Activated naive CD4-positive, alpha-beta T cell treated with anti-CD3 and anti-CD28 coated beads for 36 hours (primary cell): ENCODE measurements at regions of chrX and their contacts with region 1.

Region 1: DNA sequence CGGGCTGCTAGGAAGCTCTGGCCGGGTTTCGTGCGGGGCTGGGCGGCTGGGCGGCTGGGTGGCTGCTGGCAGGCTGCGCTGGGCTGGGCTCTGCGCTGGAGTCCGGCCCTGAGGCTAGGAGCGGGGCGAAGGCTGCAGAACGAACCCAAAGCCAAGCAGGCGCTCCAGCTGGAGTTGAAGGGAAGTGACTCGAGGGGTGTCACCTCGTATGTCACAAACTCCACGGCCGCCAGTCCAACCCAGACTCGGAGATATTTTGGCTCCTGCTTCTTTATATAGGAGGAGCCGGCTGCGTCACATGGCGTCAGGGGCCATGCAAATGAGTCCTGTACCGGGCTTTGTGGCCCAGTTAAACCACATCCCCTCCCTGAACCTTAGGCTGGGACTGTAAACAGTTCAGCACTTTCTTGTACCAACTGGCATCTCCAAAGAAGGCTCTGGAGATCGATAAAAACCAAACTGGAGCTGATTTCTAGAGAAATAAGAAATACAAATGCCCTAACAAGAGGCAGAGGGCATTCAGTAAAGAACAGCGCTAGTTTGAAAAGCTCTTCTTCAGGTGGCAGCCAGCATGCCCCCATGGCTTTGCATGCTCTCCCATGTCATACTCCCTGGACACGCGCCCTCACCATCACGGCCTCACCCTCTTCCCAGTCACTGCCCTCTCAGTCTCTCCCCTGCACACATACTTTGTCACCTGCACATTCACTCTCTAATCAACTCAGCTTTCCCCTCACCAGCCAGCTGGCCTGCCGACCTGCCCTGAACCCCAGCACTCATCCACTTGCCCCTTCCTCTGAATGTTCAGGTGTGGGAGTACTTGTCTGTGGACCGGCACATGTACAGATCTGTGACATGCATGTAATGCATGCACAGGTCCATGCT is 58.5 kb downstream of the TSC22D3 start:
- DNase-seq: peak; percentile 87
- H3K4me3 Mint-ChIP-seq: peak overlapping the region; percentile 92
- H3K27ac Mint-ChIP-seq: peak overlapping the region; percentile 77
- H3K4me1 Mint-ChIP-seq: peaks cover 37% of the 10 kb centered on the region
- H3K27me3 Mint-ChIP-seq: no peaks in the 10 kb centered on the region

Region 2: DNA sequence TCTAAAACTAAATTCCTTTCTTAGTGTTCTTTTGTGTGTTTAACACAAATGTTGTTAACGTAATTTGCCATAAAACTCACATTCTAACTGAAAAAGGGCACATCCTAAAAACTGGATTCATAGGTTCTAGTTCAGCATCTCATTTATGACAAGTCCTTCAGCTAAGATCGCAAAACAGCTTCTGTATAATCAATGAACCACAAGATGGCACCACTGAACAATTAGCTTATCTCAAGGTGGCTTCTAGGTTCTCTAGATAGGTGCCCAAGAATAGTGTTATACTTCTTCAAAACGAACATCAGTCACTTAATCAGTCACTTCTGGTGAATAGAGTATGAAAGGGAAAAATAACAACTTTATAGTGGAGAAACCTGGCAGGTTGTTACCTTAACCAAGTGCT is 1840.4 kb before region 1 on chrX:
- CTCF ChIA-PET with region 1: no interaction called
- intact Hi-C with region 1: no loop called
- DNase-seq: no peak
- H3K4me3 Mint-ChIP-seq: no peak overlapping the region
- H3K27ac Mint-ChIP-seq: no peak overlapping the region
- H3K4me1 Mint-ChIP-seq: no peaks in the 10 kb centered on the region
- H3K27me3 Mint-ChIP-seq: no peaks in the 10 kb centered on the region

Region 3: GRCh38 chrX:107565931-107566602 is 151.0 kb before region 1 on chrX:
- CTCF ChIA-PET with region 1: no interaction called
- intact Hi-C with region 1: no loop called
- DNase-seq: no peak
- H3K4me3 Mint-ChIP-seq: no peak overlapping the region
- H3K27ac Mint-ChIP-seq: no peak overlapping the region
- H3K4me1 Mint-ChIP-seq: no peaks in the 10 kb centered on the region
- H3K27me3 Mint-ChIP-seq: no peaks in the 10 kb centered on the region

Region 4: DNA sequence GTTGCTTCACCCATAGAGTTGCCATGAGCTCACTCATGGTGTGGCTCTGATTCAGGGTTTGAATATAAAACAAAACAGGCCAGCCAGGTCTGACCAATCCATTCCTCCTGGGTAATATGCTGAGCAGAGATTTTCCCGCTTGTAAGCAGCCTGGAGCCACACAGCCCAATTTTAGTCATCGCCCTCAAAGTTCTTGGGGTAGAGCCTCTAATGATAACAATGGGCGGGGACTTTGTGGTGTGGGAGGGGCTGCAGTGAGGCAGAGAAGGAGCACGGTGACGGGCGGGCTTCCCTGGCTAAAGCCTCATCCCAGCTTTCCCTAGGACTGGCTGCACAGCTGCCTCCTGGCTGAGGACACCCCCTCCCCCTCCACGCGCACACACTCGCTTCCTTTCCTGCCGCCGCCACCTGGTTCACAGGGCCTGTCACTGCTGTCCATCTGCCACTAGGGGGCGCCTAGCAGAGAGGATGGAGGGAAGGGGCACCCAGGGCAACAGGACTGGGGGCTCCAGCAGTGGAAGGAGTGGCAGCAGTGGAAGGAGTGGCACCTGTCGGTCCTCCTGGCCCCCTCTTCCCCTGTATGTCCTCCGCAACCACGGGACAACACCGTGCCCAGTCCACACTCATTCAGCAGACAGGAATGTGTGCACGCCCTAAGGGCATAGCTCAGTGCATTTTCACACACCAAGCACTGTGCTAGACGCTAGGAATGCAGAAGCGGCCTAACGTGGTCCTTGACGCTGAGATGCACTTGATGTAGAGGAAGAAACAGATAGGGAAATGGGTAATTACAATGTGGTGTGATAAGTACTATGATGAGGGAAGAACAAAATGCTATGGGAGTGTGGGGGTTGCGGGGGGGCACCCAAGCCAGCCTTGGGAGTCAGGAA is 61.9 kb before region 1 on chrX:
- CTCF ChIA-PET with region 1: interaction called, 19 read pairs
- intact Hi-C with region 1: no loop called
- DNase-seq: peak; percentile 72
- H3K4me3 Mint-ChIP-seq: no peak overlapping the region
- H3K27ac Mint-ChIP-seq: no peak overlapping the region
- H3K4me1 Mint-ChIP-seq: peaks cover 15% of the 10 kb centered on the region
- H3K27me3 Mint-ChIP-seq: no peaks in the 10 kb centered on the region

Region 5: GRCh38 chrX:107741404-107741790 is 24.3 kb after region 1 on chrX:
- CTCF ChIA-PET with region 1: interaction called, 5 read pairs
- intact Hi-C with region 1: loop called (anchors 1 kb)
- DNase-seq: no peak
- H3K4me3 Mint-ChIP-seq: peak overlapping the region; percentile 77
- H3K27ac Mint-ChIP-seq: peak overlapping the region; percentile 94
- H3K4me1 Mint-ChIP-seq: peaks cover 40% of the 10 kb centered on the region
- H3K27me3 Mint-ChIP-seq: no peaks in the 10 kb centered on the region

Region 6: GRCh38 chrX:107894038-107894437 is 177.0 kb after region 1 on chrX:
- CTCF ChIA-PET with region 1: no interaction called
- intact Hi-C with region 1: loop called (anchors 1 kb)
- DNase-seq: peak; percentile 22
- H3K4me3 Mint-ChIP-seq: no peak overlapping the region
- H3K27ac Mint-ChIP-seq: no peak overlapping the region
- H3K4me1 Mint-ChIP-seq: no peaks in the 10 kb centered on the region
- H3K27me3 Mint-ChIP-seq: no peaks in the 10 kb centered on the region

Region 7: GRCh38 chrX:108029928-108030711 is 313.1 kb after region 1 on chrX:
- CTCF ChIA-PET with region 1: no interaction called
- intact Hi-C with region 1: no loop called
- DNase-seq: no peak
- H3K4me3 Mint-ChIP-seq: peak overlapping the region; percentile 9
- H3K27ac Mint-ChIP-seq: no peak overlapping the region
- H3K4me1 Mint-ChIP-seq: peaks cover 61% of the 10 kb centered on the region
- H3K27me3 Mint-ChIP-seq: no peaks in the 10 kb centered on the region

Region 8: GRCh38 chrX:108091266-108091877 is 374.3 kb after region 1 on chrX and contains the starts of genes ATG4A and PSMD10:
- CTCF ChIA-PET with region 1: no interaction called
- intact Hi-C with region 1: loop called (anchors 1 kb)
- DNase-seq: peak; percentile 94
- H3K4me3 Mint-ChIP-seq: no peak within 1 kb of the TSS
- H3K27ac Mint-ChIP-seq: no peak within 1 kb of the TSS
- H3K4me1 Mint-ChIP-seq: peaks cover 19% of the 10 kb centered on the region
- H3K27me3 Mint-ChIP-seq: no peaks in the 10 kb centered on the region
- total RNA-seq, gene ATG4A: 8.2 to 8.6 TPM
- total RNA-seq, gene PSMD10: 54.6 to 58.8 TPM